ENCODE measurements at regions of chr2 and their contacts with region 1.

Region 1: GRCh38 chr2:231604685-231605606 is 12.3 kb downstream of the TEX44 start:
- DNase-seq: peak; percentile 80 to 97 (median 88)
- ATAC-seq: peak; percentile 89
- H3K4me3 ChIP-seq: peak overlapping the region; percentile 36
- H3K4me3 Mint-ChIP-seq: peak overlapping the region; percentile 58 to 77 (median 72)
- H3K27ac ChIP-seq: peak overlapping the region; percentile 89
- H3K27ac Mint-ChIP-seq: peak overlapping the region in 8 of 9 donors; percentile 50 to 93 (median 90)
- H3K4me1 ChIP-seq: peaks cover 0 to 9% of the 10 kb centered on the region in 2 donors
- H3K4me1 Mint-ChIP-seq: peaks cover 0 to 14% (median 4%) of the 10 kb centered on the region in 7 donors
- H3K27me3 ChIP-seq: no peaks in the 10 kb centered on the region
- H3K27me3 Mint-ChIP-seq: peaks cover 0 to 9% (median 0%) of the 10 kb centered on the region in 5 donors

Region 2: DNA sequence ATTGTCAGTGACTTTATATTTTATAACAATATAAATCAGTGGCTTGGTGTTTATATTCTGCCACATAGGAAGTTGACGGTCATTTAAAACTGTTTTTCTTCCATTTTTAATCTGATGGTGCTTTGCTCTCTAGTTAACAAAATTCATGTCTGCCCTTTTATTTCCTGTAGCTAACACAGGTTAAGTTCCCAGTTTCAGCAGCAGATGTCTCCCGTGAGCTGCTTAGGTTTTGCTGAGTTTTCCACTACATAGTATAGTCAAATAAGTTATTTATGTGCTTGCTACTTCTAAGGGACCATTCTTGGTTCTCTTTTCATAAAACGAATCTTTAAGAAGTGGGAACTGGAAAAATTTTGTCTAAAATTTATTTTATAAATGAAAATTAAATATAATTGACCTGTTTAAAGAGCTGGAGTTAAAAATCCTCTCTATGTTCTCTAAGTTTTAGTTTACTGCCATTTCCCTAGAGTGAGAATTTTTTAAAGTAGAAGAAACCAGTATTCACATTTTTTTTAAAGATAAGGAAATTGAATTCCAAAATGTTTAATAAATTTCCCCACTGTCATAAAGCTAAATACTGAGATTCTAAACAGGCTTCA is 500.7 kb before region 1 on chr2:
- CTCF ChIA-PET with region 1: interaction called, 3 read pairs
- POLR2A ChIA-PET with region 1: no interaction called
- intact Hi-C with region 1: loop called in 1 of 2 experiments (anchors 5 kb)
- DNase-seq: peak in 8 of 9 donors; percentile 10 to 58 (median 40)
- ATAC-seq: peak; percentile 84
- H3K4me3 ChIP-seq: no peak overlapping the region
- H3K4me3 Mint-ChIP-seq: no peak overlapping the region
- H3K27ac ChIP-seq: no peak overlapping the region
- H3K27ac Mint-ChIP-seq: peak overlapping the region in 2 of 9 donors; percentile 10 to 12
- H3K4me1 ChIP-seq: no peaks in the 10 kb centered on the region
- H3K4me1 Mint-ChIP-seq: peaks cover 0 to 6% (median 5%) of the 10 kb centered on the region in 7 donors
- H3K27me3 ChIP-seq: no peaks in the 10 kb centered on the region
- H3K27me3 Mint-ChIP-seq: no peaks in the 10 kb centered on the region

Region 3: DNA sequence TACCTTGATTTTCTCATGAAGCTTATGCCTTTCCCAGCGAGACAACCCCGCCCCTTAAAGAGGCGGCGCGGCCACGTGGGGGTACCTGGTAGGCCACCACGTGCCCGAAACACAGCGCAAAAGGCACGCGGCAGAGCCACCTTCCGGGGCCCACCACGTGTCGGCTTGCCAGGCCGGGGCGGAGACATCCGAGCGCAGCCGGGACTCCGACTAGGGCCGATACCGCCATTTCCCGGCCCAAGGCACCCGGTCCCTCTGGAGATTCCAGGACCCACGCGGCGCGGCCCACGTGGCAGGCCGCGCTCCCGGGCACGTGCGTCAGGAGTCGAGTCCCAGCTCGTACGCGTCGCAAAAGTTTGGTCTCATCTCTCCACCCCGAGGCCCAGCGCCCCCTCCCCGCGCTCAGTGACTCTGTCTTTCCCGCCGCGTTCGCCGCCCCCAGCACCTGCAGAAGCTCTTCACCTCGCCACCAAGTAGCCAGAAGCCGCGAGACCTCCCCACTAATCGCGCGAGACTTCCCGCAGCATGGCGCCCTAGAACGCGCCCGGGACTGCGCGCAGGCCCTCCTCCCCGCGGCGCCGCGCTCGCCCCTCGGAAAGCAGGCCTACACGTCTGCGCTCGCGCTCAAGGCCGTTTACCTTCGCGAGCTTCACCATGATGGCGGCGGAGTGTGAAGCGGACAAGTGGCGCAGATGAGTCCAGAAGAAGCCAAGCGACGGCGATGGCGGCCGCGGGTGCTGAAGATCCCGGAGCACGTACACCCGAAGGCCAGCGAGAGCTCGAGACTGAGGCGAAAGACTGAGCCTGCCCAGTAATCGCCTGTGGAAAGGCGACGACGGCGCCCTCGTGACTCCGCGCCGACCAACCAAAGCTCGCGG is 141.0 kb before region 1 on chr2 and contains the start of gene NCL:
- CTCF ChIA-PET with region 1: interaction called, 3 read pairs
- POLR2A ChIA-PET with region 1: interaction called, 4 read pairs
- intact Hi-C with region 1: loop called (anchors 1 to 2 kb)
- DNase-seq: peak; percentile 75 to 96 (median 91)
- ATAC-seq: peak; percentile 73
- H3K4me3 ChIP-seq: peak within 1 kb of the TSS; percentile 65
- H3K4me3 Mint-ChIP-seq: peak within 1 kb of the TSS; percentile 90 to 99 (median 95)
- H3K27ac ChIP-seq: peak within 1 kb of the TSS; percentile 96
- H3K27ac Mint-ChIP-seq: peak within 1 kb of the TSS; percentile 96 to 100 (median 100)
- H3K4me1 ChIP-seq: peaks cover 26 to 28% of the 10 kb centered on the region in 2 donors
- H3K4me1 Mint-ChIP-seq: peaks cover 39 to 65% (median 44%) of the 10 kb centered on the region in 7 donors
- H3K27me3 ChIP-seq: no peaks in the 10 kb centered on the region
- H3K27me3 Mint-ChIP-seq: no peaks in the 10 kb centered on the region
- total RNA-seq, gene NCL: 411 to 647 (median 426) TPM

Region 4: DNA sequence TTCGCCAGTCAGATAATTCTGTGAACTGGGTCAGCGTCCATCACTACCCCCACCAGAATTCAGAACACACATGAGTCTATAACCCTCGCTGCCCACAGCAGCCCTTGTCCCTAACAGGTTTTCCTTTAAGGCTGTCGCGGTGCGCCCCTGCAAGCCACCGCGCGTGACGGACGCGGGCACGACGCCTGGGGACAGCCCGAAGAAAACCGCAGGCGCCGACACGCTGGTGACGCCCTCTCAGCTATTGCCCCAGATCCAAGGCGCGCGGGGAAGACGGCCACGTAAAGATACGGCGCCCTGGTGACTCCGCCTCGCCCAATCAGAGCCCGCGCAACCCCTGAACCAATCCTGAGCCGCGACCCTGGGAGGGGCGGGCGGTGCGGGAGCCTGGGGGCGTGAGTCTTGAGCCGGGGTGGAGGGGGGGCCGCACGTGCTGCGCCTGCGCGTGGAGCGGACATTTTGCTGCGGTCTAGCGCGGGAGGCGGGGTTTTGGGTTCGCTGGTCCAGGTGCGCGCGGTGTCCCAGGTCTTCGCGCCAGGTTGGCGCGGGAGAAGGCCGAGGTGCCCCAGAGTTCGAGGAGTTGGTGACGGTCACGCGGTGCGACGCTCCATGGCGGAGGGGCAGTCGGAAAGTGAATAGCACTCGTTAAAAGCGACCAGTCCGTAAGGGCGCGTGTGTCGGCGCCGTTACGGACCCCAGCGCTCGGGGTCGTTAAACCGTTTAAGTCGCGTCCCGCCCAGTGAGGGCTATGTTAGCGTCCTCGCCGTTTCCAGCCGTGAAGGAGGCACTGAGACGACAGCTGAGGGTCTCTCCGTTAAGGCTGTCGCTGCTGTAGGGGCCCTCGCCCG is 90.6 kb before region 1 on chr2:
- CTCF ChIA-PET with region 1: interaction called, 7 read pairs
- POLR2A ChIA-PET with region 1: no interaction called
- intact Hi-C with region 1: loop called (anchors 1 kb)
- DNase-seq: peak; percentile 92 to 99 (median 98)
- ATAC-seq: peak; percentile 99
- H3K4me3 ChIP-seq: peak overlapping the region; percentile 84
- H3K4me3 Mint-ChIP-seq: peak overlapping the region; percentile 80 to 95 (median 92)
- H3K27ac ChIP-seq: peak overlapping the region; percentile 93
- H3K27ac Mint-ChIP-seq: peak overlapping the region; percentile 93 to 99 (median 98)
- H3K4me1 ChIP-seq: peaks cover 5 to 11% of the 10 kb centered on the region in 2 donors
- H3K4me1 Mint-ChIP-seq: peaks cover 0 to 21% (median 14%) of the 10 kb centered on the region in 7 donors
- H3K27me3 ChIP-seq: no peaks in the 10 kb centered on the region
- H3K27me3 Mint-ChIP-seq: peaks cover 0 to 4% (median 0%) of the 10 kb centered on the region in 5 donors

Region 5: GRCh38 chr2:231563378-231563961 is 41.5 kb before region 1 on chr2:
- CTCF ChIA-PET with region 1: interaction called, 3 read pairs
- POLR2A ChIA-PET with region 1: no interaction called
- intact Hi-C with region 1: loop called (anchors 1 kb)
- DNase-seq: peak in 1 of 9 donors; percentile 34
- ATAC-seq: peak; percentile 61
- H3K4me3 ChIP-seq: no peak overlapping the region
- H3K4me3 Mint-ChIP-seq: no peak overlapping the region
- H3K27ac ChIP-seq: no peak overlapping the region
- H3K27ac Mint-ChIP-seq: no peak overlapping the region
- H3K4me1 ChIP-seq: no peaks in the 10 kb centered on the region
- H3K4me1 Mint-ChIP-seq: peaks cover 0 to 2% (median 0%) of the 10 kb centered on the region in 7 donors
- H3K27me3 ChIP-seq: no peaks in the 10 kb centered on the region
- H3K27me3 Mint-ChIP-seq: peaks cover 0 to 12% (median 0%) of the 10 kb centered on the region in 5 donors